CD8-positive, alpha-beta T cell (primary cell): ENCODE measurements at regions of chr2 and their contacts with region 1.

Region 1: DNA sequence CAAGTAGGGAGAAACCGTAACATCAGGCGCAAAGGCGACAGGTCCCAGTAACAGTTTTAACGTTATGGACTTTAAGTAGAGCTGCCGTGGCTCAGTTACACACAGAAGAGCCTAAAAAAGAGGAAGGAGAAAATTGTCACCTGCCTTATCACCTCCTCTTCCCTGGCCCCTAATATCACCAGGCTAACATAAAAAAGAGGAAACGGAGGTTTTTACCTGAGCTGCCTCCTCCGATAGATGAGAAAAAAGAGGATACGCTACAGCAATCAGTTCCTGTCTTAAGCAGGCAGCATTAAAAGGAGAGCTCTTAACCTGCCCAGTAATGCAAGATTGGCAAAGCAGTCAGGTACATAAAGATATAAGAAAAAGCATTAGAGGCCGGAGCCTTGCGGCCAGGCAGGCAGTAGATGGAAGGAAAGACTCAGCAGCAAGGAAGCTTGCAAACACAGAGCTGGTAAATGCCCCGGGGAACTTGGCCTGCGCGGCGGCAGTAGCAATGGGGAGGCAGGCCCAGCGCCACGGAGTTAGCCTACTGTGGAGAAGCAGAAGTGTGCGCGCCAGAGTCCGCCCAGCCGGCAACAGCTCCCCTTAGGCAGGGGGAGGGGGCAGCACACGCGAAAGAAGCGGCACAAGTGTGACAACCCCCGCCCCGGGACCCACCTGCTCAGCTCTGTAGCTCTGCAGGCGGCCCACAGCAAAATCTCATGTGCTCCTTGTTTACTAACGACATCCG is 116.3 kb upstream of the SCN7A start:
- DNase-seq: peak in 1 of 9 experiments; percentile 11
- ATAC-seq: no peak
- H3K4me3 ChIP-seq: no peak overlapping the region
- H3K4me3 Mint-ChIP-seq: peak overlapping the region; percentile 54
- H3K27ac ChIP-seq: no peak overlapping the region
- H3K27ac Mint-ChIP-seq: no peak overlapping the region
- H3K4me1 ChIP-seq: no peaks in the 10 kb centered on the region
- H3K4me1 Mint-ChIP-seq: peaks cover 16% of the 10 kb centered on the region
- H3K27me3 ChIP-seq: no peaks in the 10 kb centered on the region
- H3K27me3 Mint-ChIP-seq: peaks cover 5% of the 10 kb centered on the region
- CTCF ChIP-seq: no peak

Region 2: DNA sequence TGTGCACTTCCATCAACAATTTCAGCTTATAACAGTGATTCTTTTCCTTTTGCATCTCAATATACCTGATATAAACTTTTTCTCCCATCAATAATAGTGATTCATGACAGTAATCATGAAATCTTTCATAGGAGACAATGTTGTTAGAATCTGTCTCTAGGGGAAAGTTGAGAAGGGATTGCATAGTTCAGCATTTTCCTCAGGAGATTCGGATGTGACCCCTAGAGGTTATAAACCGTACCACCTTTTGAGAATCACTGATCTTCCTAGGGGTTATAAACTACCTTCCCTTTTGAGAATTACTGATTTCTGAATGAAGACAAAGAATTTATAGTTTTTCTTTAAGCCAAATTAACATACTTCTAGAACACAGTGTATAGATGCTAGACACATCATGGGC is 763.3 kb before region 1 on chr2:
- CTCF ChIA-PET with region 1: no interaction called
- POLR2A ChIA-PET with region 1: no interaction called
- intact Hi-C with region 1: no loop called
- DNase-seq: no peak
- ATAC-seq: no peak
- H3K4me3 ChIP-seq: no peak overlapping the region
- H3K4me3 Mint-ChIP-seq: no peak overlapping the region
- H3K27ac ChIP-seq: no peak overlapping the region
- H3K27ac Mint-ChIP-seq: no peak overlapping the region
- H3K4me1 ChIP-seq: no peaks in the 10 kb centered on the region
- H3K4me1 Mint-ChIP-seq: no peaks in the 10 kb centered on the region
- H3K27me3 ChIP-seq: no peaks in the 10 kb centered on the region
- H3K27me3 Mint-ChIP-seq: no peaks in the 10 kb centered on the region
- CTCF ChIP-seq: no peak

Region 3: DNA sequence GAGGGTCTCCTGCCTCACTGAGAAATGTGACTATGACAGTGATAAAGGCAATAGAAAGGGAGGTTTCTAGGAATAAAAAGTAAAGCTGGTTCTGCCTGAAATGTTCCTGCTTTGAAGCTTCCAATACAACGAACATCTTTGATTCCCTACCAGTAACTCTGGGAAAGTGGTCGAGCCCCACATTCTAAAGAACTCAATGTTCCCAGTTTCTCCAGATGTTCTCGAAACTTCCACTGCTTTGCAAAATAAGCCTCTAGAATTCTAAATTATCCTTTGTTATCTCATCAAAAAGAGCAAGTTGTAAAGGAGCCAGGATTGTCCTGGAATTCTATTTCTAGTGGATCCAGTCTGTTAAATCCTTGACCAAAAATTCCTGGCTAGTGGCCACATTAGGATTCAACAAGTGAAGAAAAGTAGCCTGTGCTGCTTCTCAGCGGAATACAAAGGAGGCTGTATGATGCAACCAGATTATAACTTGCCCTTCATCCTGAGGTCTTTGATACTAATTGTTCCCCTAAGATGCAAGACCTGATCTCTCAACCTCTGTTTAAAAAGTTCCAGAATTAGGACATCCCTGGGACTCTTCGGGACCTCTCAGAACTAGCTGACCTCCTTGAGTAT is 124.7 kb before region 1 on chr2:
- CTCF ChIA-PET with region 1: no interaction called
- POLR2A ChIA-PET with region 1: no interaction called
- intact Hi-C with region 1: loop called in 1 of 2 experiments (anchors 5 kb)
- DNase-seq: no peak
- ATAC-seq: no peak
- H3K4me3 ChIP-seq: no peak overlapping the region
- H3K4me3 Mint-ChIP-seq: no peak overlapping the region
- H3K27ac ChIP-seq: no peak overlapping the region
- H3K27ac Mint-ChIP-seq: no peak overlapping the region
- H3K4me1 ChIP-seq: no peaks in the 10 kb centered on the region
- H3K4me1 Mint-ChIP-seq: no peaks in the 10 kb centered on the region
- H3K27me3 ChIP-seq: no peaks in the 10 kb centered on the region
- H3K27me3 Mint-ChIP-seq: no peaks in the 10 kb centered on the region
- CTCF ChIP-seq: no peak